WTC11 (cell line): ENCODE measurements at regions of chr19 and their contacts with region 1.

Region 1: DNA sequence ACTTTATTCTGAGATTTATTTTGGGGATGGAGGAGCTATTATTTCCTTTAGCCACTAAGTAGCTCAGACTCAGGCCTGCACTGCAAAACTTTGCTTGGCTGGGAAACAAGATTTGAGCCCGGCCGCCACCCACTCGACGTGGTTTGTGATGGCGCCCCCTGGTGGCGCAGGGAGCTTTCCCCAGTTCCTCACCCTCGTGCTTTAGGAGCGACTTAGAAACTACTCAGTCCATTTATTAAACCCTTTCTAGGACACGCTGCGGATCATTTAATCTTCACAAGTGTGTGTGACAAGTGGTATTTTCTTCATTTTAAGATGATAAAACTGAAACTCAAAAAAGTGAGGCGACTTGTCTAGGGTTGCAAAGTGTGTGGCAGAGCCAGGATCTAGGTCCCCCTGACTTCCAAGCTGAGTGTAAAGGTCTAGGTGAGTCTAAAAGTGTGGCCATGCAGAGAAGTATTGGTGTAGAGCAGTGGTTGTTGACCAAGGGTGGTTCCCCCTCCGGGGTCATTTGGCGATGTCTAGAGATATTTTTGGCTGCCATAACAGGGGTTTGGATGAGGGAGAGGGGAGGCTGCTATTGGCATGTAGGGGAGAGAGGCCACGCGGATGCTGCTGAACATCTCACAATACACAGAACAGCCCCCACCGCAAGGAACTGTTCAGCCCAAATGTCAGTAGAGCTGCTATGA is 2.2 kb downstream of the CXCL17 start:
- DNase-seq: peak; percentile 85
- ATAC-seq: peak; percentile 70
- H3K4me3 Mint-ChIP-seq: no peak overlapping the region
- H3K27ac Mint-ChIP-seq: no peak overlapping the region
- H3K4me1 Mint-ChIP-seq: peaks cover 19% of the 10 kb centered on the region
- H3K27me3 Mint-ChIP-seq: peaks cover 40% of the 10 kb centered on the region
- CTCF ChIP-seq: peak; percentile 97

Region 2: DNA sequence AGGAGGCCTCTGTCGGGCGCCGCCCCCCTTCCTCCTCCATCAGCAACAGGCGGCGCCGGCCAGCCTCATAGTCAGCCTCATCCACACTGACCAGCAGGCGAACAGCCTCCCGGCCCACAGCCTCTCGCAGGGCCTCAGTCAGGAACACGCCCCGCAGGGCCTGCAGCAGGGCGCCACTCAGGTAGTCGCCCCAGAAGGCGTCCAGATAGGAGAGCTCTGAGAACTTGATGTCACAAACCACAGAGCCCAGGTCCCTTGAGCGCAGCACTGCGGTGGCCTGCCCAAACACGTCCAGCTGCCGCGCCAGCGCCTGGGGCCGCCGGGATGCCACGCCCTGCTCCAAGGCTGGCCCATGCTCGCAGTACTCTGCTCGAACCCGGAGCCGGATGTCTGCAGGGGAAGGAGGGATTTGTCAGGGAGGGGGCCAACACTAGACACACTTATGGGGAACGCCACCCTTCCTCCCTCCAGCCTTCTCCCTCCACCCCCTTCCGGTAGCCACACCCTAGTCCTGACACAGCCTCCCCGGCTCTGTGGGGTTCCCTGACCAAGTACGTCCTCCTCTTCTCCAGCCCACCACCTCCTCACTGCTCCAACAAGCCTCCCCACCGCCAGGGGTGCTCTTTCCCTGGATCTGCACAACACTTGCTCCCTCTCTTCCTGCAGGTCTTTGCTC is 240.9 kb before region 1 on chr19:
- CTCF ChIA-PET with region 1: no interaction called
- POLR2A ChIA-PET with region 1: no interaction called
- DNase-seq: peak; percentile 54
- ATAC-seq: peak; percentile 32
- H3K4me3 Mint-ChIP-seq: no peak overlapping the region
- H3K27ac Mint-ChIP-seq: peak overlapping the region; percentile 0
- H3K4me1 Mint-ChIP-seq: peaks cover 31% of the 10 kb centered on the region
- H3K27me3 Mint-ChIP-seq: peaks cover 6% of the 10 kb centered on the region; the same call in 1 of the 2 replicates
- CTCF ChIP-seq: no peak

Region 3: GRCh38 chr19:42396381-42397262 is 43.9 kb before region 1 on chr19:
- CTCF ChIA-PET with region 1: interaction called, 24 read pairs
- POLR2A ChIA-PET with region 1: interaction called, 6 read pairs
- DNase-seq: peak; percentile 100
- ATAC-seq: peak; percentile 94
- H3K4me3 Mint-ChIP-seq: peak overlapping the region; percentile 78
- H3K27ac Mint-ChIP-seq: peak overlapping the region; percentile 86
- H3K4me1 Mint-ChIP-seq: peaks cover 30% of the 10 kb centered on the region
- H3K27me3 Mint-ChIP-seq: peaks cover 30% of the 10 kb centered on the region
- CTCF ChIP-seq: no peak

Region 4: DNA sequence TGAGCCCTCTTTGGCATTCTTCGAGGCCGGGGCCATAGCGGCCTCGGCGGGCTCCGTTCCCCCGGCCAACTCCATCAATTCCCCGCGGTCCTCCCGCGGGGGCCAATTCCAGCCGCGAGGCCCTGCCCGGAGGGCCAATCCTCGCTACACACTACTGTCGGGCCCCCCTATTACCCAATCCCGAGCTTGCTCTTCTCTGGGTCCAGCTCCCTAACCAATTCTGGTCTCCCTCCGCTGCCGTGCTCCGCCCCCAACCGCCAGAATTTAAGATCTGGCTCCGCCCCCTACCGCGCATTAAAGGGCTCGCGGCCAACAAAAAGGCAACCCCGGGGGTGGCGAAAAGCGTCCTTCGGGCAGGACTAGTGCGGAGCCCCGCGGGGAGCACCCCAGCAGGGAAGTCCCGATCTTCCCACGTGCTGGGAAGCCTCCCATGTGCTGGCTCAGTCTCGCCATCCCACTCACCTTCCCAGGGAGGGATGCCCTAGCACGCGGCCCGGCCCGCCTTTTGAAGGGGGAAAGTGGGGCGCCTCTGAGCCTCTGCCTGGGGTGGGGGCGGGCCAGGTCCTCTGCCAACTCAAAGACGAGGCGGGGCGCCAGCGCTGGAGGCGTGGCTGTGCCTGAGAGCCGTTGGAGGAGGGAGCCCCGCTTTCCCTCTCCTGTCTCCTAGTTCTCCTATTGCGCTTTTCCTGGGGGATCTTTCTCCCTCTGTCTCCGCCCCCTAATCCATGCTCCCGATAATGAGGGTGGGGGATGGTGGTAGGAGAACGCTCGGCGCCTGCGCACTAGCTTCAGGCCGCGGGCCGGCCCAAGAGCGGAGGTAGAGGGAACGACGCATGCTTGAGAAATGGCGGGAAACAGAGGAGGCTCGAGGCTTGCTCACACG is 16.8 kb before region 1 on chr19:
- CTCF ChIA-PET with region 1: interaction called, 81 read pairs
- POLR2A ChIA-PET with region 1: interaction called, 5 read pairs
- DNase-seq: peak; percentile 93
- ATAC-seq: peak; percentile 90
- H3K4me3 Mint-ChIP-seq: peak overlapping the region; percentile 82
- H3K27ac Mint-ChIP-seq: no peak overlapping the region
- H3K4me1 Mint-ChIP-seq: peaks cover 31% of the 10 kb centered on the region
- H3K27me3 Mint-ChIP-seq: peaks cover 98% of the 10 kb centered on the region
- CTCF ChIP-seq: no peak

Region 5: DNA sequence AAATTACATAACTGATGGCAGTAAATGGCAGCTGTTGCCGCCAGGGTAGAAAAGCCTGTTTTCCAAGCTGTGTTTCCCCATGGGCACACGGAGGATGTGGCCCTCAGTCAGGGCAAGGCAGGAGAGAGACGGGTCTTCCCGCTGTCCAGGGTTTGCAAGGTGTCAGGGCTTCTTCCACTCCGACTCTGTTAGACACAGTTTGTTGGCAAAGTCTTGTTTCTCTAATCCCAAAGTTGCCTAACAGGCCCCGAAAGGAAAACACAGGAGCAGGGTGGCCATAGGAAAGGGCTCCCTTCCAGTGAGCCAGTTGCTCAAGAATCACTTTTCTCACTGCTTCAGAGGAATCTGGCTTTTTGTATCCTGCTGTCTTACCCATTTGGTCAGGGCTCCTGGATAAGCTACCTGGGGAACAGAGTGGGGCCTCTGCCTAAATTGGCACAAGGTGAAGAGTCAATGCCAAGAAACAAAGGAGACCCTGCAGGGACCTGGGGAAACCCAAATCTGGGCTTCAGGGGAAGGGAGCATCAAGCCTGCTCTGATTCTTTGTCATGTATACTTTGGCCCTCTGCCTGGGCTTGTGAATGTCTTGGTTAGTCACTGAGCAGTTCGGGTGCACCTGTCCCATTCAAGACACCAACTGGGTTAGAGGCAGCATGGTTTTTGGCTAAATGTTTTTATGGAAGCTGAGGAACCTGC is 31.2 kb after region 1 on chr19:
- CTCF ChIA-PET with region 1: interaction called, 51 read pairs
- POLR2A ChIA-PET with region 1: no interaction called
- DNase-seq: no peak
- ATAC-seq: peak; percentile 20; the same call in 1 of the 2 replicates
- H3K4me3 Mint-ChIP-seq: no peak overlapping the region
- H3K27ac Mint-ChIP-seq: peak overlapping the region; percentile 94
- H3K4me1 Mint-ChIP-seq: peaks cover 66% of the 10 kb centered on the region
- H3K27me3 Mint-ChIP-seq: no peaks in the 10 kb centered on the region
- CTCF ChIP-seq: no peak

Region 6: GRCh38 chr19:42540071-42540553 is 99.6 kb after region 1 on chr19:
- CTCF ChIA-PET with region 1: interaction called, 13 read pairs
- POLR2A ChIA-PET with region 1: no interaction called
- DNase-seq: no peak
- ATAC-seq: peak; percentile 38
- H3K4me3 Mint-ChIP-seq: no peak overlapping the region
- H3K27ac Mint-ChIP-seq: no peak overlapping the region
- H3K4me1 Mint-ChIP-seq: peaks cover 28% of the 10 kb centered on the region
- H3K27me3 Mint-ChIP-seq: peaks cover 10% of the 10 kb centered on the region
- CTCF ChIP-seq: no peak